ENCODE measurements at regions of chr13 and their contacts with region 1.

Region 1: DNA sequence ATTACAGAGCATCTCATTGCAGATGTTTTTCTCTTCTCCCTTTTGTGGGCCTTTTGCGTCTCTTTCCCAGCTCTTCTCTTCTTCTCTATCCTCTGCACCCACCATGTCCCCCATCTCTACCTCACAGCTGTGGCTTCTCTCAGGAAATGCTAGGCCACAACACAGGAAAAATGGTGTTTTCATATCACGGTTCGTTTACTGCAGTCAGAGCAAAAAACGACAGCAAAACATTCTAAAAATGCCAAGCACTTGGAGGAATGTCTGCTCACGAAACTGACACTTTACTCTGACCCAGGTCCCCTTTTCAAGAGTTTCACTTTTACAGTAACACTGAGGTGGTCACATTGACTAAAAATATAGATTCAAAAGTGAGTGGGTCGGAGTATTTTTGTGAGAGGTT is 152.2 kb downstream of the DCT start:
- DNase-seq: peak in 4 of 14 experiments; percentile 20 to 59 (median 40)
- ATAC-seq: no peak
- H3K4me3 ChIP-seq: peak overlapping the region; percentile 18
- H3K4me3 Mint-ChIP-seq: peak overlapping the region; percentile 39
- H3K27ac ChIP-seq: no peak overlapping the region
- H3K27ac Mint-ChIP-seq: peak overlapping the region; percentile 38
- H3K4me1 ChIP-seq: peaks cover 76% of the 10 kb centered on the region
- H3K4me1 Mint-ChIP-seq: peaks cover 80% of the 10 kb centered on the region
- H3K27me3 ChIP-seq: no peaks in the 10 kb centered on the region
- H3K27me3 Mint-ChIP-seq: peaks cover 28% of the 10 kb centered on the region
- CTCF ChIP-seq: no peak

Region 2: DNA sequence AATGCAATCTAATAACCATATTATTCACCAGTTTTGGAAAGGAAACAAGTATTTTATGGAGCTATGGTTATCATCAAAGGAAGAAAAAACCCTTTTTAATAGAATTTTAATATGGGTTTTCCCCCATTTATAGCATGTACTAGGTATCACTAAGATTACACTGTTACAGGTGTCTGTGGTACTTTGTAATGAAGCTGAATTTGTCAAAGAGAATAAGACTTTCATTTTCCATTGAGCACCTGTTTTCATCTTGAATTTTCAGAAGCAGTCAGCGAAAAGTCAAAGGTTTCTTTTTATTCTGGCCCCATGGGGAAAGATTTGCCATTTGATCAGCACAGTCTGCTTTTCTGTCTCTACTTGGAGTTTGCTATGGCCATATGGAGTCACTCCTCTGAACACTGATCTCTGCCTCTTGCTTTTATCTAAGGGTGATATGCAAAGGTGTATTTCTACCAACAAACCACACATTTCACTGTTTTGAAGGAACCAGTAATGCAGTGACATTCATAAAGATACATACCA is 437.8 kb before region 1 on chr13:
- CTCF ChIA-PET with region 1: no interaction called
- POLR2A ChIA-PET with region 1: no interaction called
- intact Hi-C with region 1: no loop called
- DNase-seq: no peak
- ATAC-seq: no peak
- H3K4me3 ChIP-seq: no peak overlapping the region
- H3K4me3 Mint-ChIP-seq: no peak overlapping the region
- H3K27ac ChIP-seq: no peak overlapping the region
- H3K27ac Mint-ChIP-seq: no peak overlapping the region
- H3K4me1 ChIP-seq: no peaks in the 10 kb centered on the region
- H3K4me1 Mint-ChIP-seq: no peaks in the 10 kb centered on the region
- H3K27me3 ChIP-seq: no peaks in the 10 kb centered on the region
- H3K27me3 Mint-ChIP-seq: no peaks in the 10 kb centered on the region
- CTCF ChIP-seq: no peak

Region 3: DNA sequence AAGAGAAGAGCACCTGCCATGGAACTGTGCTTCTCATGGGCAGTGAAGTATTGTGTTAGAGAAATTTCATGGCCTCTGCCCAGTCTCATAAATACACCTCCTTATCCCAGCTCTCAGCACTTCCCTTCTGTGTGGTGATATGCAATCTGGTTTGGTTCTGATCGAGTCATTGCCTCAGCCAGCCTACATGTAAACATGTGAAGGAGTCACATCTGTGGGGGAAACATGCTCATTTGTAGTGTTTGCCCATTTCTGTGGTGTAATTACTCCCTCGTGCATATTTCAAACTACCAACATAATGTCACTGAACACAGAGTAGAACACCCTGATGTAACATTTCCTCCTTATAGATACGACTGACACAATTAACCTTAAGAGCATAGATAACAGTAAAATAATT is 30.8 kb before region 1 on chr13:
- CTCF ChIA-PET with region 1: no interaction called
- POLR2A ChIA-PET with region 1: no interaction called
- intact Hi-C with region 1: no loop called
- DNase-seq: no peak
- ATAC-seq: no peak
- H3K4me3 ChIP-seq: no peak overlapping the region
- H3K4me3 Mint-ChIP-seq: no peak overlapping the region
- H3K27ac ChIP-seq: no peak overlapping the region
- H3K27ac Mint-ChIP-seq: no peak overlapping the region
- H3K4me1 ChIP-seq: no peaks in the 10 kb centered on the region
- H3K4me1 Mint-ChIP-seq: no peaks in the 10 kb centered on the region
- H3K27me3 ChIP-seq: no peaks in the 10 kb centered on the region
- H3K27me3 Mint-ChIP-seq: no peaks in the 10 kb centered on the region
- CTCF ChIP-seq: no peak

Region 4: GRCh38 chr13:94601446-94602431 is 274.4 kb after region 1 on chr13 and contains the start of gene GPR180:
- CTCF ChIA-PET with region 1: no interaction called
- POLR2A ChIA-PET with region 1: interaction called, 5 read pairs
- intact Hi-C with region 1: loop called in 1 of 2 experiments (anchors 10 kb)
- DNase-seq: peak; percentile 72 to 98 (median 84)
- ATAC-seq: peak; percentile 98
- H3K4me3 ChIP-seq: peak within 1 kb of the TSS; percentile 76
- H3K4me3 Mint-ChIP-seq: peak within 1 kb of the TSS; percentile 87
- H3K27ac ChIP-seq: peak within 1 kb of the TSS; percentile 59 to 61
- H3K27ac Mint-ChIP-seq: peak within 1 kb of the TSS; percentile 75
- H3K4me1 ChIP-seq: peaks cover 17% of the 10 kb centered on the region
- H3K4me1 Mint-ChIP-seq: peaks cover 31% of the 10 kb centered on the region
- H3K27me3 ChIP-seq: no peaks in the 10 kb centered on the region
- H3K27me3 Mint-ChIP-seq: no peaks in the 10 kb centered on the region
- CTCF ChIP-seq: no peak
- total RNA-seq, gene GPR180: 0.80 to 0.92 TPM

Region 5: GRCh38 chr13:95614641-95615245 is 1287.4 kb after region 1 on chr13:
- CTCF ChIA-PET with region 1: no interaction called
- POLR2A ChIA-PET with region 1: no interaction called
- intact Hi-C with region 1: no loop called
- DNase-seq: no peak
- ATAC-seq: no peak
- H3K4me3 ChIP-seq: no peak overlapping the region
- H3K4me3 Mint-ChIP-seq: no peak overlapping the region
- H3K27ac ChIP-seq: no peak overlapping the region
- H3K27ac Mint-ChIP-seq: no peak overlapping the region
- H3K4me1 ChIP-seq: no peaks in the 10 kb centered on the region
- H3K4me1 Mint-ChIP-seq: no peaks in the 10 kb centered on the region
- H3K27me3 ChIP-seq: peaks cover 3 to 11% of the 10 kb centered on the region in 2 experiments
- H3K27me3 Mint-ChIP-seq: peaks cover 5% of the 10 kb centered on the region
- CTCF ChIP-seq: no peak

Measured in CD4-positive, alpha-beta T cell (primary cell).